ENCODE measurements at regions of chr1 and their contacts with region 1.

Region 1: GRCh38 chr1:53837924-53838652 is at the start of gene NDC1:
- DNase-seq: peak; percentile 86
- ATAC-seq: peak; percentile 89
- H3K4me3 Mint-ChIP-seq: peak within 1 kb of the TSS; percentile 94
- H3K27ac Mint-ChIP-seq: peak within 1 kb of the TSS; percentile 98
- H3K4me1 Mint-ChIP-seq: peaks cover 33% of the 10 kb centered on the region
- H3K27me3 Mint-ChIP-seq: no peaks in the 10 kb centered on the region
- CTCF ChIP-seq: no peak
- total RNA-seq, gene NDC1: 10.6 and 14.0 TPM in 2 replicates

Region 2: DNA sequence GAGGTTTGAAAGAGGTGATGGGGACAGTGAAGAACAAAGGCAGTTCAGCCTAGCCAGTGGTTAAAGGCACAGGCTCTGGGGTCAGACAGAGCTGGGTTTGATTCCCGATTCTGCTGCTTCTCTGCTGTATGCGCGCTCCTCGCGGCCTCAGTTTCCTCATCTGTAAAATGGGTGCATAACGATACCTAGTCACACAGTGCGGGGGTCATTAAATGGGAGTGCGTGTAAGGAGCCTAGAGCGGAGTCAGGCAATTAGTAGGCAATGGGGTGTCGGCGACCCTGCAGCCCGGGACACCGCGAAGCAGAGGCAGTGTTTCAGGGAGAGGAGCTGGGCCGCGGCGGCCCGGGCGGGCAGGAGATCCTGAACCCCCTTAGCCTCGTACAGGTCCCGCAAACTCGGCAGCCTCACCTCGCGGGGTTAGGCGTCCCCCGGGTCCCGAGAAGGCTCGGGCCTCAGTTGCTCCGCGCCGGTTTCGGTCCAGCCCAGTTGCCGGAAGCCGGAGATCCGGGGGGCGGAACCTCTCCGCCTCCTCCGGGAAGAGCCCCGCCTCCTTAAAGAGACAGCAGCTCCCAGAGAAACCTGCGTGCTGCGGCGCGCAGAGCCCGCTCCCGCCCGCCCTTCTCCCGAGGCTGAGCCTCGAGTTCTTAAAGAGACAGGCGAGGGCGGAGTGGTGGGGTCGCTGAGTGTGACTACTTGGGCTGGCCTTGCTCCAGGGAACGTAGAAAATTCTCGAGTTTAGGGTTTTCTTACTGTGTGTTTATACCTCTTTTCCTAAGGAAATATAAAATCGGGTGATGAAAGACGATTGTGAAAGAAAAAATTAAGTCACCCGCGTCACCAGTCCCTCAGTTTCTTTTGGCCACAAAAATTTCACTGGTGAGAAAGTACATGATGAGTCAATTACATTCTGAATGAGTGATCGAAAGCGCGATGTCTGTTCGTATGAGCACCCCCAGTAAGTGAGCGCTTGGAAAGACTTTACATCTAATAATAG is 51.5 kb after region 1 on chr1 and contains the start of gene YIPF1:
- CTCF ChIA-PET with region 1: no interaction called
- POLR2A ChIA-PET with region 1: interaction called, 3 read pairs
- intact Hi-C with region 1: loop called (anchors 1 kb)
- DNase-seq: peak; percentile 81
- ATAC-seq: peak; percentile 98
- H3K4me3 Mint-ChIP-seq: peak within 1 kb of the TSS; percentile 98
- H3K27ac Mint-ChIP-seq: peak within 1 kb of the TSS; percentile 94
- H3K4me1 Mint-ChIP-seq: peaks cover 40% of the 10 kb centered on the region
- H3K27me3 Mint-ChIP-seq: no peaks in the 10 kb centered on the region
- CTCF ChIP-seq: no peak
- total RNA-seq, gene YIPF1: 16.6 and 18.5 TPM in 2 replicates

Region 3: GRCh38 chr1:54199765-54200518 is 361.9 kb after region 1 on chr1 and contains the starts of genes CYB5RL and MRPL37:
- CTCF ChIA-PET with region 1: no interaction called
- POLR2A ChIA-PET with region 1: interaction called, 3 read pairs
- intact Hi-C with region 1: loop called (anchors 2 kb)
- DNase-seq: peak; percentile 74
- ATAC-seq: peak; percentile 99
- H3K4me3 Mint-ChIP-seq: peak within 1 kb of the TSS; percentile 92
- H3K27ac Mint-ChIP-seq: peak within 1 kb of the TSS; percentile 81
- H3K4me1 Mint-ChIP-seq: peaks cover 32% of the 10 kb centered on the region
- H3K27me3 Mint-ChIP-seq: no peaks in the 10 kb centered on the region
- CTCF ChIP-seq: no peak
- total RNA-seq, gene CYB5RL: 8.4 and 8.7 TPM in 2 replicates
- total RNA-seq, gene MRPL37: 62.5 and 64.1 TPM in 2 replicates

Region 4: DNA sequence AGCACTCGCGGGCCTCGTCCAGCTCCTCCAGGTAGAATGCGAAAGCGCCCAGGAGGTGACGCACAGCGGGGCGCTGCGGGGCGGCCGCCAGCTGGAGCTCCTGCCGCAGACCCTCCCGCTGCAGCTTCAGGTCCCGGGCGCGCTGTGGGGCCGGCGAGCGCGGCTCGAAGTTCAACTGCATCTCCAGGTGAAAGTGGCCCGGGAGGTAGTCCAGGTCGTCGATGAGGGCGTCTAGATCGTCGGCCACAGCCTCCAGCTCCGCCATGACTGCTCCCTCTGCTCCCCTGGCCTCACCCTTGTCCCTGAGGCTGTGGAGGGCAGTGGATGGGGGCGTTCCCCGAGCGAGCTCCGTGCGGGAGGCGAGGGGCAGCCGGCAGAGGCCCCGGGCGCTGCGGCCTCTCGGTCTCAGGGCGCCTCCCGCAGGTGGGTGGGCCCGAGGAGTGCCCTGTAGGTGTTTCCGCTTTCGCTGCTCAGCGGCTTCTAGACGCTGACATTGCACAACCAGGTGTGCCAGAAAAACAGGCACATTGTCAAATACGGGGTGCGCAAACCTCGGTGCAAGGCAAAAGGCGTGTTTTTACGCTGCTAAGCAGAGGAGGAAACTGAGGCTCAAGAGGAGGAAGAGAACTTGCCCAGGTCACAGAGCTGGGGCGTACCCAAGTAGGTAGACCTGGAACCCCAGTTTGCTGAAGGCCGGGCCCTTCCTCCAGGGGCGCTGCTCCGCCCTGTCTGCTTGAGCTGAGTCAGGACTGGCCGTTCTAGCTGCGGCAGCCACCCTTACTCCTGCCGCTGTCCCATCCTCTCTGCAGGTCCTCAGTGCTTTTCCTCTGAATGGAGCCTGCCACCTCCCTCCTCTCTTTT is 963.0 kb after region 1 on chr1 and contains the start of gene TTC22:
- CTCF ChIA-PET with region 1: no interaction called
- POLR2A ChIA-PET with region 1: interaction called, 4 read pairs
- intact Hi-C with region 1: loop called (anchors 1 kb)
- DNase-seq: peak; percentile 67
- ATAC-seq: peak; percentile 90
- H3K4me3 Mint-ChIP-seq: peak within 1 kb of the TSS; percentile 90
- H3K27ac Mint-ChIP-seq: peak within 1 kb of the TSS; percentile 83
- H3K4me1 Mint-ChIP-seq: peaks cover 29% of the 10 kb centered on the region
- H3K27me3 Mint-ChIP-seq: no peaks in the 10 kb centered on the region
- CTCF ChIP-seq: no peak
- total RNA-seq, gene TTC22: 4.9 and 6.0 TPM in 2 replicates